ENCODE measurements at regions of chr3 and their contacts with region 1.

Region 1: DNA sequence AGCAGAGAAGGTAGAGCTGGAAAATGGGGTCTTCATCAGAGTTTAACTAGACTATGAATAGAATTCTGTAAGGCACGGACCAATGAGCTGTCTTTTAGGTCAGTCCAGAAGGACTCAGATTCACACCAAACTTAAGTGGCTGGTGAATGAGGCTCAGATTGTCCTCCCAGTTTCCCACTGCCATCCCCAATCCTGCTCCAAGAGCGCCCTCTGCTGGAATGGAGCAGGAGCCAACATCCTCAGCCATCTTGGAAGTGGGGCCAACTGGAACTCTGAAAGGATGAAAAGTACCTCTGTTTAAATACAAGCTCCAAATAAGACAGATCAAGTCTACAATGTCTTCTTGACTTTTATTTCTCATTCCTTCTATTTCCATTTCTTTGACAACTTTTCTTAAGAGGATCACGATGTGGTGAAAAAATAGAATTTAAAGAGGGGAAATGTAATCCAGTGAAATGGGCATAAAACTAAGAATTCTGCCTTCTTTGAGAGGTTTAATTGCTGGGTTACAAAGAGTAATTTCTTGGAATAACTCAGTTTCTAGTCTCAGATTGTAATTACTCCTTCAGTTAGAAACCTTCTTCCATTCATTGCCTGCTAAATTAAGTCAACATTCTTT is 217.1 kb upstream of the TPRG1 start:
- DNase-seq: peak; percentile 72
- H3K4me3 ChIP-seq: no peak overlapping the region
- H3K27ac ChIP-seq: no peak overlapping the region
- H3K4me1 ChIP-seq: peaks cover 11% of the 10 kb centered on the region
- H3K27me3 ChIP-seq: no peaks in the 10 kb centered on the region
- CTCF ChIP-seq: peak; percentile 93 to 98

Region 2: GRCh38 chr3:187319699-187320302 is 1634.9 kb before region 1 on chr3:
- CTCF ChIA-PET with region 1: no interaction called
- dilution Hi-C with region 1: no loop called
- in situ Hi-C with region 1: no loop called
- intact Hi-C with region 1: loop called (anchors 10 kb)
- DNase-seq: peak; percentile 59
- H3K4me3 ChIP-seq: no peak overlapping the region
- H3K27ac ChIP-seq: no peak overlapping the region
- H3K4me1 ChIP-seq: peaks cover 8% of the 10 kb centered on the region
- H3K27me3 ChIP-seq: no peaks in the 10 kb centered on the region
- CTCF ChIP-seq: peak; percentile 72 to 98

Region 3: GRCh38 chr3:188154014-188154808 is 800.5 kb before region 1 on chr3 and contains the start of gene LPP:
- CTCF ChIA-PET with region 1: no interaction called
- dilution Hi-C with region 1: no loop called
- in situ Hi-C with region 1: loop called in 1 of 2 experiments (anchors 25 kb)
- intact Hi-C with region 1: loop called (anchors 5 kb)
- DNase-seq: peak; percentile 85
- H3K4me3 ChIP-seq: peak within 1 kb of the TSS; percentile 43 to 77 (median 66)
- H3K27ac ChIP-seq: peak within 1 kb of the TSS; percentile 94
- H3K4me1 ChIP-seq: peaks cover 32% of the 10 kb centered on the region
- H3K27me3 ChIP-seq: no peaks in the 10 kb centered on the region
- CTCF ChIP-seq: no peak
- total RNA-seq, gene LPP: 66.8 to 109 TPM

Region 4: DNA sequence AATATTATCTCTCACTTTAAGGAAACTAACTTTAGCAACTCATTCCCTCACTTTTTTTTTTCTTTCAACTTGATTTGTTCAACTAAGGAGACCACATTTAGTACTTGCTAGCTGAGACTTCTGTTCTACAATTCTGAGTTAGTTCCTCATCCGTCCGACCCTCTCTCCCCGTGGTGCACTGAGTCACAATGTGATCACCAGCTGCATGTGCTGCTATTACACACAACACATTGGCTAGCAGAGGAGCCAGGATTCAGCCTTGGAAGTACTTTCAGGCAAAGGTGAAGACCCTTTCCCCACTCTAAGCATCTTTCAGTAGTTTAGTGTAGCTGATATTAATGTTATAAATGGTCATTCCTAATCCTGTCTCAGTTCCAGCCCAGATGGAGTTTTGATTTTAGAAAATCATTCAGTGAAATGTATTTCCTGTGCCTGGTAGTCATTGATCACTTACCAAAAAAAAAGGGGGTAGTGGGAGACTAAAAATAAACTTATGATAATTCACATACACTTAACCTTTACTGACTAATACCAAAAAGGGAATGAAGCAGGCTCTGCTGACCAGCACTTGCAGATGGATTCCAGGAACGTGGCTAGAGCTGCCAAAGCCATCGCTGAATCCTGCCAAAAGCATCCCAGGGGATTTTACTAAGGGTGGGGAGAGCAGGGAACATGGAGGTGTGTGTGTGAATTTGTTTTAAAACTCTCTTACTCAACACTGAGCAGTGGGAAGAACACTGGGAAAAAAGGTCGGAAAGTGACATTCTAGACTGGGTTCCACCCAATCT is 375.9 kb before region 1 on chr3:
- CTCF ChIA-PET with region 1: no interaction called
- dilution Hi-C with region 1: no loop called
- in situ Hi-C with region 1: no loop called
- intact Hi-C with region 1: loop called (anchors 2 kb)
- DNase-seq: peak; percentile 38
- H3K4me3 ChIP-seq: no peak overlapping the region
- H3K27ac ChIP-seq: no peak overlapping the region
- H3K4me1 ChIP-seq: peaks cover 19% of the 10 kb centered on the region
- H3K27me3 ChIP-seq: no peaks in the 10 kb centered on the region
- CTCF ChIP-seq: no peak

Region 5: GRCh38 chr3:188830893-188831292 is 123.8 kb before region 1 on chr3:
- CTCF ChIA-PET with region 1: no interaction called
- dilution Hi-C with region 1: no loop called
- in situ Hi-C with region 1: loop called in 1 of 2 experiments (anchors 10 kb)
- intact Hi-C with region 1: loop called (anchors 1 kb)
- DNase-seq: no peak
- H3K4me3 ChIP-seq: no peak overlapping the region
- H3K27ac ChIP-seq: no peak overlapping the region
- H3K4me1 ChIP-seq: peaks cover 14% of the 10 kb centered on the region
- H3K27me3 ChIP-seq: no peaks in the 10 kb centered on the region
- CTCF ChIP-seq: peak; percentile 36 to 43

Region 6: DNA sequence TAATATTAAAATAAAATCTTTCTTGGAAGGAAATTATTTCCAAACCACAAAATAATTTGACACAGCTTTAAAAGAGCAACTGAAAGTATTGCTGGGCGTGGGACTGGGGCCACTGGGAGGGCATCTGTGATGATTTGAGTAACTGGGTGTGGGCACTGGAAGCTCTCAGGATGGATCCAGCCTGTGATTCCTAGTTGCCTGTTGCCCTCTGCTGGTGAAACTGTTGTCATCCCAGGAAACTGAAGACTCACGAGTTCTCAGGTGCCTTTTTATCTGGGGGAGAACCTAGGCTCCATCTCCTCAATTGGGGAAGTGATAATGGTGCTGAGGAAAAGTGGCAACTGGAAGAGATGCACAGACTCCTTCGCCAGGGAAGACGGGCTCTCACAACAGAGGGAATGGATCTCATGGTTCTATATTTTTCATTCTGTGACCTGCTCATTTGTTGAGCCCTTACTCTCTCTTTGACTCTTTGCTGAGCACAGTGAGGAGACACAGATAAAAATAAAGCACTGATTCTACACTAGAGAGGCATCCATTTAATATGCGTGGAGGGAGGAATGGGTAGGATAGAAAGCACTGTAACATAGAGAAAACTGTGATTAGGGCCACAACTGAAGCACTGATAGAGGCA is 278.6 kb after region 1 on chr3:
- CTCF ChIA-PET with region 1: no interaction called
- dilution Hi-C with region 1: no loop called
- in situ Hi-C with region 1: no loop called
- intact Hi-C with region 1: loop called (anchors 2 kb)
- DNase-seq: peak; percentile 58
- H3K4me3 ChIP-seq: no peak overlapping the region
- H3K27ac ChIP-seq: no peak overlapping the region
- H3K4me1 ChIP-seq: no peaks in the 10 kb centered on the region
- H3K27me3 ChIP-seq: no peaks in the 10 kb centered on the region
- CTCF ChIP-seq: peak; percentile 80 to 90